HCT116 (cell line): ENCODE measurements at regions of chr19 and their contacts with region 1.

Region 1: GRCh38 chr19:52070476-52070875 is 21.8 kb upstream of the ZNF432 start:
- DNase-seq: no peak
- ATAC-seq: no peak
- H3K4me3 ChIP-seq: no peak overlapping the region
- H3K27ac ChIP-seq: no peak overlapping the region
- H3K4me1 ChIP-seq: no peaks in the 10 kb centered on the region
- H3K27me3 ChIP-seq: no peaks in the 10 kb centered on the region
- CTCF ChIP-seq: no peak
- POLR2A ChIP-seq: no peak
- RAD21 ChIP-seq: no peak

Region 2: DNA sequence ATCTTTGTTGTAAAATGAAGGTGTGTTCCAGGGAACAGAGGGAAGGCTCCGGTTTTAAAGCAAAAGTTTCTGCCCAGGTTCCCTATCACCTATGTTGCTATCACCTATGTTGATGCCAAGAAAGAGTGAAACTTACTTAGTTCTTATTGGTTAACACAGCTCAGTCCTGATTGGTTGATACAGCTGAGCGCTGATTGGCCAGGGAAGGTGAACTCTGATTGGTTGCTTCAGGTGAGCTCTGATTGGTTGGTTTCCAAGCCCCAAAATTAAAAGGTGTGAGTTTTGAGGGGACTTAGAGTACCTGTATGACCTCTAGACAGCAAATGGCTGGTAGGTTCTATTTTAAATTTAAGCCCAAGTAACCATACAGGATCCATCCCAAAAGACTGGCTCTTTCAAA is 233.3 kb before region 1 on chr19:
- CTCF ChIA-PET with region 1: no interaction called
- POLR2A ChIA-PET with region 1: no interaction called
- RAD21 ChIA-PET with region 1: no interaction called
- intact Hi-C with region 1: loop called (anchors 10 kb)
- DNase-seq: no peak
- ATAC-seq: no peak
- H3K4me3 ChIP-seq: no peak overlapping the region
- H3K27ac ChIP-seq: no peak overlapping the region
- H3K4me1 ChIP-seq: no peaks in the 10 kb centered on the region
- H3K27me3 ChIP-seq: no peaks in the 10 kb centered on the region
- CTCF ChIP-seq: no peak
- POLR2A ChIP-seq: no peak
- RAD21 ChIP-seq: no peak